ENCODE measurements at regions of chr15 and their contacts with region 1.

Region 1: DNA sequence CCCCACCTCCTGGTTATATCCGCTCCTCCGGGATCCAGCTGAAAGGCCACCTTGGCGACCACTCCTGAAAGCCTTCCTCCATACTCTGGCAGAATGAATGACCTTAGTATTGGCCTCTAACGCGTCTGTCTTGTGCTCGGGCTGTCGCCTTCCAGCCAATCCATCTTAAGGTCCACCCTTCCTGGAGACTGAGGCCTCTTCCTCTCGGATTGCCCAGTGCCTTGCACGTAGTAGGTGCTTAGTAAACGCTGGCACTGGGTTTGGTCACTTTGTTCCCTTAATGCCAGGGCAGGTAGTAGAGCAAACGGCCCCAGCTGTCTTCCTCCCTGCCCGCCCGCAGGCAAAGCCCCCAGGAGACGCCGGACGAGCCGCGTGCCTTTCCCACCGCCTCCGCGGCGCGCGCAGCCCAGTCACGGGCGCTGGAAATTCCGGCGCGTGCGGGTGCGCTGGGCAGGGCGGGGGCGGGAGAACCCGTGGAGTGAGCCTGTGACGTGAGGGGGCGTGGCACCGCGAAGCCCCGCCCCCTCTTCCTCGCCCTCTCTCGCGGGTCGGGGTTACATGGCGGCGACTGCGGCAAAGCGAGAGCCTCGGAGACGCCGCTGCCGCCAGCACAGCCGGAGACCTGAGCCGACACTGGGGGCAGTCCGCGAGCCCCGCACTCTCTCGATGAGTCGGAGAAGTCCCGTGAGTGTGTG is at the start of gene MAPK6:
- DNase-seq: peak; percentile 94
- H3K4me3 ChIP-seq: peak within 1 kb of the TSS; percentile 82
- H3K27ac ChIP-seq: peak within 1 kb of the TSS; percentile 80
- H3K4me1 ChIP-seq: peaks cover 40% of the 10 kb centered on the region
- CTCF ChIP-seq: no peak
- total RNA-seq, gene MAPK6: 19.8 and 25.9 TPM in 2 replicates

Region 2: GRCh38 chr15:51829360-51830275 is 189.2 kb before region 1 on chr15 and contains the start of gene TMOD3:
- CTCF ChIA-PET with region 1: no interaction called
- POLR2A ChIA-PET with region 1: no interaction called
- intact Hi-C with region 1: loop called (anchors 5 kb)
- DNase-seq: peak; percentile 93
- H3K4me3 ChIP-seq: peak within 1 kb of the TSS; percentile 74
- H3K27ac ChIP-seq: peak within 1 kb of the TSS; percentile 61
- H3K4me1 ChIP-seq: peaks cover 24% of the 10 kb centered on the region
- CTCF ChIP-seq: no peak
- total RNA-seq, gene TMOD3: 17.4 and 31.5 TPM in 2 replicates

Region 3: GRCh38 chr15:51982013-51982769 is 36.6 kb before region 1 on chr15:
- CTCF ChIA-PET with region 1: no interaction called
- POLR2A ChIA-PET with region 1: interaction called, 4 read pairs
- intact Hi-C with region 1: loop called (anchors 2 kb)
- DNase-seq: peak; percentile 88
- H3K4me3 ChIP-seq: peak overlapping the region; percentile 22
- H3K27ac ChIP-seq: no peak overlapping the region
- H3K4me1 ChIP-seq: peaks cover 14% of the 10 kb centered on the region
- CTCF ChIP-seq: peak; percentile 93

Region 4: GRCh38 chr15:52039925-52040781 is 21.3 kb after region 1 on chr15:
- CTCF ChIA-PET with region 1: no interaction called
- POLR2A ChIA-PET with region 1: interaction called, 8 read pairs
- intact Hi-C with region 1: loop called (anchors 1 kb)
- DNase-seq: peak; percentile 25
- H3K4me3 ChIP-seq: no peak overlapping the region
- H3K27ac ChIP-seq: peak overlapping the region; percentile 20
- H3K4me1 ChIP-seq: peaks cover 85% of the 10 kb centered on the region
- CTCF ChIP-seq: no peak

Region 5: DNA sequence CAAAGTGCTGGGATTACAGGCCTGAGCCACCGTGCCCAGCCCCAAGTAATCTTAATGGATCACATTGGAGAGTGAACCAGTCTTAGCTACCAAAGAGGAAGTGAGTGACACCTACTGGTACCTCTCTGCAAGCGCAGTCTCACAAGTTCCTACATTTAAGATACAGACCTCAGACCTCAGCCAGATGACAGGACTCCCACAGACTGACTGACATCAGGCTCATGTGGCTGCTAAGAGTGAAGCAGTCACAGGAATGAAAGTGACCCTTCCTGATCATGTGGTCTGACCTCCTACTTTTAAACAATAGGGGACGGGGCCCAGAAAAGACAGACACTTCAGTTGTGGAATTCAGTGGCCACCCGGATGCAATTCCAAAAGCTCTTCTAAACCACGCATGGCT is 208.6 kb after region 1 on chr15:
- CTCF ChIA-PET with region 1: no interaction called
- POLR2A ChIA-PET with region 1: no interaction called
- intact Hi-C with region 1: loop called (anchors 2 kb)
- DNase-seq: peak; percentile 92
- H3K4me3 ChIP-seq: no peak overlapping the region
- H3K27ac ChIP-seq: peak overlapping the region; percentile 20
- H3K4me1 ChIP-seq: peaks cover 90% of the 10 kb centered on the region
- CTCF ChIP-seq: peak; percentile 83